ENCODE measurements at regions of chr5 and their contacts with region 1.

Region 1: DNA sequence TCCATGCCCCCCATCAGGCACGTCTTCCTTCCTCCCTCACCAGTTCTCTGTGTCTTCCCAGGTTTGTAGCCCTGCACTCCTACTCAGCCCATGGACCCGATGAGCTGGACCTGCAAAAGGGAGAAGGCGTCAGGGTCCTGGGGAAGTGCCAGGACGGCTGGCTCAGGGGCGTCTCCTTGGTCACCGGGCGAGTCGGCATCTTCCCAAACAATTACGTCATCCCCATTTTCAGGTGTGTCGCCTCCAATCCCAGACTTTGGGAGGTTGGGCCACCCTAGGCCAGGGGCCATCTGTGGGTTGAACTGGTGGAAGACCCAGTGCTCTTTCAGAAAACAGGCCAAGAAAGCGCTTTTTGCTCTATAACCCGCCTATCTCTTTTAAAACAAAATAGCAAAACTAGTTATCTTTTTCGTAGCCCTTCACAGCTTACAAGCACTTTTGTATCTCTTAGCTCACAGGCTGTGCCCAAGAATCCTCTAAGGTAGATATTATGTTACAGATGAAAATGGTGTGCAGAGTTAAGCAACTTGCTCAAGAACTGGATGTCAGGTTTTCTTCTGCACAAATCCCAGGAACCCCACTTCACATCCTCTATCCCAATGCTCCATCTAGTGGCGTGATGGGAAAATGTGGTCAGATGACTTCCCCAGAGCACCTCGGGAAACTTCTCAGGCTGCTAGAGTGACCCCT is 56.2 kb downstream of the PLAC8L1 start:
- DNase-seq: peak; percentile 71 to 78 (median 74)
- ATAC-seq: peak; percentile 93
- H3K4me3 ChIP-seq: no peak overlapping the region
- H3K27ac ChIP-seq: no peak overlapping the region
- H3K4me1 ChIP-seq: no peaks in the 10 kb centered on the region; a peak in 1 of 5 replicates
- H3K27me3 ChIP-seq: no peaks in the 10 kb centered on the region
- CTCF ChIP-seq: peak; percentile 77 to 90 (median 81)
- EP300 ChIP-seq: no peak
- POLR2A ChIP-seq: no peak
- RAD21 ChIP-seq: peak; percentile 88 to 95

Region 2: DNA sequence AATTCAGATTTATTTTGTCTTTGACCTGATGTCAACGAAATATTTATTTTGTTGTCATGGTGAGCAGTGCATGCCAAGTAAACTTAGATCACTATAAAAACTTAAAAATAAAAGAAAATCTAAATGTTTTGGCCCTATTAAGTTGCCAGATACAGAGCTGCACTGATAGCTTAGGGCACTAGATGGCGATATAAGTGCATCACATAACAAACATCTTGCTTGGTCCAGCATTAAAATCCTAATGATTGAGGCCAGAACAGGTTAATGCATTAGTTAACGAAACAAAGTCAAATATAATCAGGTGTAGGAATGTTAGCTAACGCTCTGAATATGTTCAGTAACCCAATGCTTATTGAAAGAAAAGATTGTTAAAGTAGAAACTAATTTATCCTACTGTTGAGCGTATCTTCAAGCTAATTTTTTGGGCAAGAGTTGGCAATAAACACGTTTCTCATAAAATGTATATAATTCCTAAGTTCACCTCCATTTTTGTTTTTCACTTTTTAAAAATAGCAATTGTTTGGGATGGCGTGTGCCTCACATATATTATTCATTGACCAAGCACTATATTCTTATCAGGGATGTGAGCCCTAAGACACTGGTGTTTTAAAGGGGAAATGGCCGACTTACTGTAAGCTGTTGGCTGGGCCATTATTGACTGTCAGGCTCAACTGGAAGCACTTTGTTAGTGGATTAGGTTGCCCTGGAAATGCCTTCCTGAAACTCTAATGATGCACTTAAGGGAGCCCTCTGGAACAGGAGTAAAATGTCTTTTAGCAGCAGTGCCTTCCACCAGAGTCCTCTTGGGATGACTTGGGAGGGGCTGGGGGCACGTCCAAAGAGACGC is 1845.2 kb before region 1 on chr5:
- CTCF ChIA-PET with region 1: interaction called, 4 read pairs
- POLR2A ChIA-PET with region 1: no interaction called
- in situ Hi-C with region 1: loop called (anchors 25 kb)
- intact Hi-C with region 1: loop called (anchors 1 kb)
- DNase-seq: peak; percentile 26 to 67 (median 32)
- ATAC-seq: peak; percentile 88
- H3K4me3 ChIP-seq: no peak overlapping the region
- H3K27ac ChIP-seq: no peak overlapping the region
- H3K4me1 ChIP-seq: peaks cover 0 to 4% of the 10 kb centered on the region in 2 experiments; a peak in 2 of 5 replicates
- H3K27me3 ChIP-seq: peaks cover 3 to 6% of the 10 kb centered on the region in 2 experiments; a peak in 2 of 5 replicates
- CTCF ChIP-seq: peak; percentile 59 to 82 (median 77)
- EP300 ChIP-seq: no peak
- POLR2A ChIP-seq: no peak
- RAD21 ChIP-seq: peak; percentile 80 to 87

Region 3: DNA sequence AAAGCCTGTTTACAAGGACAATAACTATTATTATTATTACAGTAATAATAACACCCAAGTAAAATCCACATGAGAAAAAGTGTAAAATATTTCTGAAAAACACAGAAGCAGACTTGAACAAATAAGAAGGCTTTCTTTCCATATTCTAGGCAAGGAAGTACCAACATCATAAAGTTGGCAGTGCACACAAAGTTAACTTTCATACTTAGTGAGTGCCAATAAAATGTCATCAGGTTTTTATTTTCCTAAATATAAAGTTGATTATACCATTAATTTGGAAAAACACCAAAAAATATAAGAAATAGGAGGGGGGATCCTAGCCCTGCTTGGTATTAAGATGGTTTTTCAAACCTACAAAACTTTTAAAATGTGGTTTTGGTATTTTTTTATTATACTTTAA is 375.4 kb before region 1 on chr5:
- CTCF ChIA-PET with region 1: no interaction called
- POLR2A ChIA-PET with region 1: no interaction called
- in situ Hi-C with region 1: no loop called
- intact Hi-C with region 1: no loop called
- DNase-seq: no peak
- ATAC-seq: no peak
- H3K4me3 ChIP-seq: no peak overlapping the region
- H3K27ac ChIP-seq: no peak overlapping the region
- H3K4me1 ChIP-seq: no peaks in the 10 kb centered on the region
- H3K27me3 ChIP-seq: no peaks in the 10 kb centered on the region
- CTCF ChIP-seq: no peak
- EP300 ChIP-seq: no peak
- POLR2A ChIP-seq: no peak
- RAD21 ChIP-seq: no peak

Region 4: GRCh38 chr5:145697251-145697990 is 351.7 kb before region 1 on chr5:
- CTCF ChIA-PET with region 1: no interaction called
- POLR2A ChIA-PET with region 1: no interaction called
- in situ Hi-C with region 1: no loop called
- intact Hi-C with region 1: loop called (anchors 1 kb)
- DNase-seq: peak; percentile 19 to 69 (median 34)
- ATAC-seq: peak; percentile 96
- H3K4me3 ChIP-seq: no peak overlapping the region
- H3K27ac ChIP-seq: no peak overlapping the region; the same call in 2 of the 3 replicates
- H3K4me1 ChIP-seq: 0 out of 5 replicates have a peak, but pooled peaks cover 0 to 2% of the 10 kb centered on the region in 2 experiments
- H3K27me3 ChIP-seq: no peaks in the 10 kb centered on the region
- CTCF ChIP-seq: peak; percentile 74 to 79 (median 77)
- EP300 ChIP-seq: no peak
- POLR2A ChIP-seq: no peak
- RAD21 ChIP-seq: peak; percentile 74 to 87

Region 5: DNA sequence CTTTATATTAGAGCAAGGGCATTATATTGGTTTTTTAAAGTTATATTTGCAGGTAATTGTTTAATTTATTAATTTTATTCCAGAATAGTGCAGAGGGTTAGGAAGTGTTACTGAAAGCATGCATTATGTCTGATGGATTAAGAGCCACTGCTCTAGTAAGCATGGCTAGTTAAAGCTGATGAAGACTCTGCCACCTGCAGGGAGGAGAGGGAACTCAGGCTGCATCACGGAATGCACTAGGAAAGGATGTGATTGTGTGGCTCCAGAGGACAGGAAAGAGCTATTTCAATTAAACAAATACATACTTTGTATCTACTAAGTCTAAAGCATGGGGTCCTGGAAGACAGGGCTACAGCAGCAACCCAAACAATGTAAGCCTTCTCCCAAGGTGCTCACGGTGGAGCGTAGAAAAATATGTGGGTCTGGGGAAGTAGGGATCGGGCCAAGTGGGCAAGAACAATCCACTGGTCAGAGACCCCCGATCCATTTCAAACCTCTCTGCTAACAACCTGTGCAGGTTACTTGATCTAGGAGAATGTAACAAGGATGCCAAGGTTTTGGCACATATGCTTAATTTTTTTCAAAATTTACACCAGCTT is 161.1 kb before region 1 on chr5:
- CTCF ChIA-PET with region 1: no interaction called
- POLR2A ChIA-PET with region 1: interaction called, 3 read pairs
- in situ Hi-C with region 1: no loop called
- intact Hi-C with region 1: loop called (anchors 1 kb)
- DNase-seq: peak; percentile 46 to 74 (median 58)
- ATAC-seq: peak; percentile 97
- H3K4me3 ChIP-seq: no peak overlapping the region
- H3K27ac ChIP-seq: no peak overlapping the region
- H3K4me1 ChIP-seq: no peaks in the 10 kb centered on the region
- H3K27me3 ChIP-seq: no peaks in the 10 kb centered on the region
- CTCF ChIP-seq: peak; percentile 78 to 86 (median 78)
- EP300 ChIP-seq: no peak
- POLR2A ChIP-seq: no peak
- RAD21 ChIP-seq: peak; percentile 80 to 88

Region 6: GRCh38 chr5:146130440-146131045 is 81.4 kb after region 1 on chr5:
- CTCF ChIA-PET with region 1: no interaction called
- POLR2A ChIA-PET with region 1: no interaction called
- in situ Hi-C with region 1: no loop called
- intact Hi-C with region 1: loop called (anchors 1 kb)
- DNase-seq: peak in 1 of 4 experiments; percentile 21
- ATAC-seq: peak; percentile 50; the same call in 2 of the 3 replicates
- H3K4me3 ChIP-seq: no peak overlapping the region
- H3K27ac ChIP-seq: no peak overlapping the region
- H3K4me1 ChIP-seq: no peaks in the 10 kb centered on the region
- H3K27me3 ChIP-seq: no peaks in the 10 kb centered on the region
- CTCF ChIP-seq: peak in 2 of 3 experiments; percentile 35 to 63; a peak in 4 of 6 replicates
- EP300 ChIP-seq: no peak
- POLR2A ChIP-seq: no peak
- RAD21 ChIP-seq: peak; percentile 58 to 72; a peak in 3 of 4 replicates

Measured in K562 (cell line).